Dorsolateral prefrontal cortex (tissue), 120 donors: ENCODE measurements at regions of chr9 and their contacts with region 1.

Region 1: GRCh38 chr9:91193658-91194391 is 167.9 kb downstream of the AUH start:
- DNase-seq: peak; percentile 46 to 77 (median 67)
- H3K4me3 ChIP-seq: peak overlapping the region; percentile 35 to 80 (median 65)
- H3K27ac ChIP-seq: peak overlapping the region; percentile 42 to 98 (median 90)
- H3K27me3 ChIP-seq: no peaks in the 10 kb centered on the region
- CTCF ChIP-seq: peak in 11 of 56 donors; percentile 4 to 28 (median 13)

Region 2: DNA sequence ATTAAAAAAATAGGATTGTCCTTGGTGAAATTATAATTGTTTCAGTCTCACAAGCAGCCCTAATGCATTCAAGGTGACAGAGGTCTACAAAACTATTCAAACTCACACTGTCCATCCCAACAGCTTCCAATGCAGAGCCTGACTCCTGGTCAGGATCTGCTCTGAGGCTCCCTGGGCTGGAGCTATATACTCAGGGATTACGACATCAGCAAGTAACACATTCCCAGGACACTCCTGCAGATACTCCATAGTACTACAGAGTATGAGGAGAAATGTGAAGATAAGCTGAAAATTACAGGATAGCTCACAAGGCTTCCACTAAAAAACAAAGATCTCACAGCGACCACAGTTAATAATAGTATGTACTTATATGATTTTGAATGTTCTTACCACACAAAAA is 37.8 kb after region 1 on chr9:
- intact Hi-C with region 1: no loop called
- DNase-seq: no peak
- H3K4me3 ChIP-seq: no peak overlapping the region
- H3K27ac ChIP-seq: no peak overlapping the region
- H3K27me3 ChIP-seq: no peaks in the 10 kb centered on the region
- CTCF ChIP-seq: no peak

Region 3: DNA sequence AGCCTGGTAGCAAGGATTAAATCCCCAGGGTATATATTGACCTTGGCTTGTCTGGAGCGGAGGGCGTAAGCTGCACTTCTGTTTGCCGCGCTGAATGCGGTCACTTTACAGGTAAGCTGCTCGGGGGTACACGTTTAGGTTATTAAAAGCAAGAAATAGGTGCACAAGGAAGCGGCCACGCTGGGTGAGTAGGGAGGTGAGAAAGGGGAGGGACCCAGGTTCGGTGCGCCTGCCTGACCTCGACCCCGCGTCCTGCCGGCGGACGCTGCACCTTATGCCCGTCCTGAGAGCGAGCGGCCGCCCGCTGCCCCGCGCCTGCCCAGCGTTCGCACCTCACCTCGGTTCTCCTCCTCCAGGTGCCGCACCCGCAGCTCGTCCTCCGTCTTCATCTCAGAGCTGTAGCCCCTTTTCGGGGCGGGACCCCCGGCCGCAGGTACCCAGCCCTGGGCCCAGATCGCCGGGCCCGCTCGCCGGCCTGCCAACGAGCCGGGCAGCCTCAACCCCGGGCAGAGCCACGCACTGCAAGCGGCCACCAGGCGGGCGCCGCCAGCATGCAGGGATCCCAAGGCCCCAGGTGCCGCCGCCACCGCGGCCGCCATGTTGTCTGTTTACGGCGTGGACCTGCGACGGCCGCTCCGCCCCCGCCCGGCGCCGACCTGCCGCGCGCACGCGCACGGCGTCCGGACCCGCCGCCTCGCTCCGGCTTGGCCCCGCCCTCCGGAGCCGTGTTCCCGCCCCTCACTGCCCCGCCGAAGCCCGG is 167.6 kb after region 1 on chr9 and contains the start of gene AUH:
- intact Hi-C with region 1: loop called in 1 of 2 experiments (anchors 5 kb)
- DNase-seq: peak; percentile 71 to 96 (median 80)
- H3K4me3 ChIP-seq: peak within 1 kb of the TSS; percentile 64 to 100 (median 98)
- H3K27ac ChIP-seq: peak within 1 kb of the TSS; percentile 66 to 97 (median 91)
- H3K27me3 ChIP-seq: no peaks in the 10 kb centered on the region
- CTCF ChIP-seq: peak in 22 of 56 donors; percentile 7 to 48 (median 29)
- total RNA-seq, gene AUH: 21.9 to 46.8 (median 35.4) TPM